Caco-2 (cell line): ENCODE measurements at regions of chr2 and their contacts with region 1.

Region 1: DNA sequence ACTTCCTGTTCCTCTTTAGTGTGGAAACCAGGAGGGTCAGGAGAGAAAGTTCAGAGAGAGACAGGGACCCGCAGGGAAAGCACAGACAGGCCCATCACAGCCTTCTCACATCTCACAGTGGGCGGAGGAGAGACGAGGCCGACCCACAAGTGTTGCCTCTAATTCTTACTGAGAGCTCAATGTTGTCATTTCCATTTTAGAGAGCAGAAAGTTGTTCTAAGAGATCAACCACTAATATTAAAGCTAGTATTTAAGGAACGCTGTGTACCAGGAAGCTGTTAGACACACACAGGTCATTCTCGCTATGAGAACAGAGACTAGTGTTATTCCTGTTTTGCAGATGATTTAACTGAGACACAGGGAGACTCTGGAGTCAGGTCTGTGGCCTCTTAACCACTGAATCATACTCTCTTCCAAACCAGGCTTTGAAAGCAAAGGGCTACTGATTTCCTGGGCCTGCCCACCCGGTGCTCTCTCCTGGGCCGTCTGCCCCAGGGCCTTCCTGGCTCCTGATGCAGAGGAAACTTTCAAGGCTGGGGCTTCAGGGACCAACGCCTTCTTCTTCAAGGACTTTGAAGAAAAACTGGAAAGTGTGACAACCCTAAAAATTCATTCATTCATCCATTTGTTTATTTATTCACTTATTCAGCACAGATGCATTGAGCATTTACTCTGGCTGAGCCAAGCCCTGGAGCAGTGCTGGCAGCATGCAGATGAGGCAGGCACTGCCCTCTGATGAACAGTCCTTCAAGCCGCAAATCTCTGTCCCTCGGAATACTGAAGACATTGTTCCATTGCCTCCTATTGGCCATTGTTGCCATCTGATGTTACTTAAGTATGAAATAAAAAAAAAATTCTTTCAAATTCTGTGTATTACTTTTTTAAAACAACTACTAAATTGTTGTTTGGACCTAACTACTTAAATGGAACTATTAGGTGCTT is 37.2 kb upstream of the BIN1 start:
- DNase-seq: no peak
- H3K4me3 ChIP-seq: no peak overlapping the region
- H3K4me3 Mint-ChIP-seq: no peak overlapping the region
- H3K27ac Mint-ChIP-seq: no peak overlapping the region
- H3K4me1 ChIP-seq: no peaks in the 10 kb centered on the region
- H3K4me1 Mint-ChIP-seq: peaks cover 16% of the 10 kb centered on the region
- H3K27me3 ChIP-seq: no peaks in the 10 kb centered on the region
- H3K27me3 Mint-ChIP-seq: no peaks in the 10 kb centered on the region
- CTCF ChIP-seq: no peak

Region 2: DNA sequence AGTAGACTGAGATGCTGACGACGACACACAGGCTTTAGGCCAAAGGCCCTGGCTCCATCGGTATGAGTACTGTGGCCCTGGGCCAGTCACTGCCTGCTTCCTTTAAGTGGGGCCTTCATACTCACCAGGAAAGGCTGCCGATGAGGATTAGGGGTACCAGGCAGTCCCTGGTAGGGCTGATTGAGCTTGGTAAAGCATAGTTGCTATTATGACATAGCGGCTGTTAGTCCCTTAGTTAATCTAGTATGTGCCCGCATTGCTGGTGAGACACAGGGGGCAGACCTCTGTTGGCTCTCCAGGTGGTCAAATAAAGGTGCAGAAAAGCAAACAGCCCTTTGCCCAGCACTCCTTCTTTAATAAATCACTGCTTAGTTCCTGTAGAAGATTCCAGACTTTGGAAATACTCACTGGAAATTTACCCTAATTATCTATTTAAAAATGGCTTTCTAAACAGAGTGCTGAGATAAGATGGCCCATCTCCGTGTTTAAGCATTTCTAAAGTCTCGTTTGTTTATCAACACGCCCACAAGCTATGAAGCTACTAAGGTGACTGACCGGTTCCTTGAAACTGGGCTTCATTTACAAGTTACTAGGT is 28.5 kb before region 1 on chr2:
- CTCF ChIA-PET with region 1: interaction called, 10 read pairs
- POLR2A ChIA-PET with region 1: no interaction called
- intact Hi-C with region 1: no loop called
- DNase-seq: peak; percentile 89 to 95
- H3K4me3 ChIP-seq: peak overlapping the region; percentile 29; the same call in 1 of the 2 replicates
- H3K4me3 Mint-ChIP-seq: peak overlapping the region; percentile 65
- H3K27ac Mint-ChIP-seq: peak overlapping the region; percentile 60
- H3K4me1 ChIP-seq: peaks cover 54% of the 10 kb centered on the region
- H3K4me1 Mint-ChIP-seq: peaks cover 32% of the 10 kb centered on the region
- H3K27me3 ChIP-seq: no peaks in the 10 kb centered on the region
- H3K27me3 Mint-ChIP-seq: no peaks in the 10 kb centered on the region
- CTCF ChIP-seq: no peak